Naive thymus-derived CD4-positive, alpha-beta T cell (primary cell): ENCODE measurements at regions of chr9 and their contacts with region 1.

Region 1: GRCh38 chr9:68779558-68780384 is 74.7 kb downstream of the PIP5K1B start:
- DNase-seq: peak; percentile 92 to 98 (median 95)
- ATAC-seq: peak; percentile 95
- H3K4me3 ChIP-seq: peak overlapping the region; percentile 88
- H3K4me3 Mint-ChIP-seq: no peak overlapping the region
- H3K27ac ChIP-seq: peak overlapping the region; percentile 90
- H3K27ac Mint-ChIP-seq: no peak overlapping the region
- H3K4me1 ChIP-seq: peaks cover 36 to 49% of the 10 kb centered on the region in 2 donors
- H3K4me1 Mint-ChIP-seq: peaks cover 0 to 8% (median 0%) of the 10 kb centered on the region in 7 donors
- H3K27me3 ChIP-seq: no peaks in the 10 kb centered on the region
- H3K27me3 Mint-ChIP-seq: peaks cover 0 to 6% (median 3%) of the 10 kb centered on the region in 5 donors

Region 2: DNA sequence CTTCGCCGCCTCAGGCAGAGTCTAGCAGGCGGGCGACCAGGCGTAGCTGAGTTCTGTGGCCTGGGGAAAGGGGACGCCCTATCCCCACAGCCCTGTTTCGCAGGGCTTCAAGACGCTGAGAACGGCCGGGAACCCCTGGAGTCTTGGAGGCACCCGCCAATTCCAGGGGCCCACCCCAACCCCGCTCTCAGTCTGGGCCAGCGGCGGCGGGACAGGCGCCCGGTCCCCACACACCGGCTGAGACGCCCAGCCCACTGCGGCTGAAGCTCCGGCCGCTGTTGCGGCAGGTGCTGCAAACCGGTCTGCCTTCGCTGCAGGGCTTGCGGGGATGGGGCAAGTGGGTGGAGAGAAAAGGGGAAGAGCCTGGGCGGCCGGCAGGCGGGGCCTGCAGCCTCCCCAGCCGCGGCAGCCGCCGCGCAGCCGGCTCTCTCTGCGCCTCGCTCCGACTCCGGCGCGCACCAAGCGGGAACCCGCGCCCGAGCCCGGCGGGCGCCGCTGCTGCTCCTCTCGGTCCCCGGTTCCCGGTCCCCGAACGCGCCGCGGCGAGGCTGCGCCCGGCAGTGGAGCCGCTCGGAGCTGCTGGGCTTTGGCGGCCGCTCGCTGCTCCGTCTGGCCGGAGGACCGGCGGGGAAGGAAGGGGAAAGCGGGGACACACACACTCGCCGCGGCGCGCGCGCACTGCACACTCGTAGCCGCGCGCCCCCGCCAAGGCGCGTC is 74.8 kb before region 1 on chr9 and contains the start of gene PIP5K1B:
- CTCF ChIA-PET with region 1: no interaction called
- POLR2A ChIA-PET with region 1: no interaction called
- intact Hi-C with region 1: loop called in 1 of 2 experiments (anchors 2 kb)
- DNase-seq: peak in 6 of 9 donors; percentile 2 to 77 (median 13)
- ATAC-seq: peak; percentile 87
- H3K4me3 ChIP-seq: no peak within 1 kb of the TSS
- H3K4me3 Mint-ChIP-seq: peak within 1 kb of the TSS; percentile 67 to 95 (median 80)
- H3K27ac ChIP-seq: no peak within 1 kb of the TSS
- H3K27ac Mint-ChIP-seq: peak within 1 kb of the TSS in 1 of 9 donors; percentile 70
- H3K4me1 ChIP-seq: peaks cover 0 to 6% of the 10 kb centered on the region in 2 donors
- H3K4me1 Mint-ChIP-seq: peaks cover 5 to 25% (median 20%) of the 10 kb centered on the region in 7 donors
- H3K27me3 ChIP-seq: peaks cover 3 to 14% of the 10 kb centered on the region in 2 donors
- H3K27me3 Mint-ChIP-seq: peaks cover 74 to 86% (median 77%) of the 10 kb centered on the region in 5 donors
- total RNA-seq, gene PIP5K1B: 0.22 to 4.2 (median 1.5) TPM

Region 3: GRCh38 chr9:68895741-68896478 is 116.1 kb after region 1 on chr9:
- CTCF ChIA-PET with region 1: interaction called, 5 read pairs
- POLR2A ChIA-PET with region 1: interaction called, 3 read pairs
- intact Hi-C with region 1: loop called (anchors 2 to 5 kb)
- DNase-seq: peak in 7 of 9 donors; percentile 26 to 79 (median 70)
- ATAC-seq: peak; percentile 81
- H3K4me3 ChIP-seq: peak overlapping the region; percentile 15
- H3K4me3 Mint-ChIP-seq: peak overlapping the region; percentile 3 to 89 (median 77)
- H3K27ac ChIP-seq: peak overlapping the region; percentile 64
- H3K27ac Mint-ChIP-seq: peak overlapping the region; percentile 86 to 95 (median 91)
- H3K4me1 ChIP-seq: peaks cover 0 to 26% of the 10 kb centered on the region in 2 donors
- H3K4me1 Mint-ChIP-seq: peaks cover 33 to 68% (median 62%) of the 10 kb centered on the region in 7 donors
- H3K27me3 ChIP-seq: no peaks in the 10 kb centered on the region
- H3K27me3 Mint-ChIP-seq: no peaks in the 10 kb centered on the region

Region 4: GRCh38 chr9:68999393-69000105 is 219.8 kb after region 1 on chr9:
- CTCF ChIA-PET with region 1: no interaction called
- POLR2A ChIA-PET with region 1: interaction called, 7 read pairs
- intact Hi-C with region 1: loop called (anchors 1 kb)
- DNase-seq: peak in 8 of 9 donors; percentile 56 to 82 (median 74)
- ATAC-seq: peak; percentile 93
- H3K4me3 ChIP-seq: no peak overlapping the region
- H3K4me3 Mint-ChIP-seq: no peak overlapping the region
- H3K27ac ChIP-seq: no peak overlapping the region
- H3K27ac Mint-ChIP-seq: peak overlapping the region in 4 of 9 donors; percentile 14 to 75 (median 44)
- H3K4me1 ChIP-seq: peaks cover 0 to 15% of the 10 kb centered on the region in 2 donors
- H3K4me1 Mint-ChIP-seq: peaks cover 14 to 41% (median 30%) of the 10 kb centered on the region in 7 donors
- H3K27me3 ChIP-seq: no peaks in the 10 kb centered on the region
- H3K27me3 Mint-ChIP-seq: peaks cover 0 to 8% (median 0%) of the 10 kb centered on the region in 5 donors

Region 5: DNA sequence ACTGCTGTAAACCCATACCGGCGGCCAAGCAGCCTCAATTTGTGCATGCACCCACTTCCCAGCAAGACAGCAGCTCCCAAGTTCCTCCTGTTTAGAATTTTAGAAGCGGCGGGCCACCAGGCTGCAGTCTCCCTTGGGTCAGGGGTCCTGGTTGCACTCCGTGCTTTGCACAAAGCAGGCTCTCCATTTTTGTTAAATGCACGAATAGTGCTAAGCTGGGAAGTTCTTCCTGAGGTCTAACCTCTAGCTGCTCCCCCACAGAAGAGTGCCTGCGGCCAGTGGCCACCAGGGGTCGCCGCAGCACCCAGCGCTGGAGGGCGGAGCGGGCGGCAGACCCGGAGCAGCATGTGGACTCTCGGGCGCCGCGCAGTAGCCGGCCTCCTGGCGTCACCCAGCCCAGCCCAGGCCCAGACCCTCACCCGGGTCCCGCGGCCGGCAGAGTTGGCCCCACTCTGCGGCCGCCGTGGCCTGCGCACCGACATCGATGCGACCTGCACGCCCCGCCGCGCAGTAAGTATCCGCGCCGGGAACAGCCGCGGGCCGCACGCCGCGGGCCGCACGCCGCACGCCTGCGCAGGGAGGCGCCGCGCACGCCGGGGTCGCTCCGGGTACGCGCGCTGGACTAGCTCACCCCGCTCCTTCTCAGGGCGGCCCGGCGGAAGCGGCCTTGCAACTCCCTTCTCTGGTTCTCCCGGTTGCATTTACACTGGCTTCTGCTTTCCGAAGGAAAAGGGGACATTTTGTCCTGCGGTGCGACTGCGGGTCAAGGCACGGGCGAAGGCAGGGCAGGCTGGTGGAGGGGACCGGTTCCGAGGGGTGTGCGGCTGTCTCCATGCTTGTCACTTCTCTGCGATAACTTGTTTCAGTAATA is 255.9 kb after region 1 on chr9 and contains the start of gene FXN:
- CTCF ChIA-PET with region 1: no interaction called
- POLR2A ChIA-PET with region 1: interaction called, 3 read pairs
- intact Hi-C with region 1: loop called in 1 of 2 experiments (anchors 1 kb)
- DNase-seq: peak; percentile 60 to 89 (median 81)
- ATAC-seq: peak; percentile 95
- H3K4me3 ChIP-seq: peak within 1 kb of the TSS; percentile 72
- H3K4me3 Mint-ChIP-seq: peak within 1 kb of the TSS; percentile 91 to 99 (median 97)
- H3K27ac ChIP-seq: peak within 1 kb of the TSS; percentile 73
- H3K27ac Mint-ChIP-seq: peak within 1 kb of the TSS; percentile 88 to 95 (median 91)
- H3K4me1 ChIP-seq: peaks cover 9 to 16% of the 10 kb centered on the region in 2 donors
- H3K4me1 Mint-ChIP-seq: peaks cover 14 to 73% (median 38%) of the 10 kb centered on the region in 7 donors
- H3K27me3 ChIP-seq: no peaks in the 10 kb centered on the region
- H3K27me3 Mint-ChIP-seq: no peaks in the 10 kb centered on the region
- total RNA-seq, gene FXN: 16.7 to 28.3 (median 19.1) TPM

Region 6: GRCh38 chr9:69759421-69760277 is 979.9 kb after region 1 on chr9 and contains the start of gene PTAR1:
- CTCF ChIA-PET with region 1: no interaction called
- POLR2A ChIA-PET with region 1: interaction called, 3 read pairs
- intact Hi-C with region 1: loop called (anchors 5 to 10 kb)
- DNase-seq: peak; percentile 80 to 95 (median 89)
- ATAC-seq: peak; percentile 93
- H3K4me3 ChIP-seq: peak within 1 kb of the TSS; percentile 76
- H3K4me3 Mint-ChIP-seq: peak within 1 kb of the TSS; percentile 87 to 99 (median 96)
- H3K27ac ChIP-seq: peak within 1 kb of the TSS; percentile 93
- H3K27ac Mint-ChIP-seq: peak within 1 kb of the TSS; percentile 85 to 98 (median 94)
- H3K4me1 ChIP-seq: peaks cover 7 to 16% of the 10 kb centered on the region in 2 donors
- H3K4me1 Mint-ChIP-seq: peaks cover 14 to 51% (median 35%) of the 10 kb centered on the region in 7 donors
- H3K27me3 ChIP-seq: no peaks in the 10 kb centered on the region
- H3K27me3 Mint-ChIP-seq: no peaks in the 10 kb centered on the region
- total RNA-seq, gene PTAR1: 59.6 to 82.4 (median 65.7) TPM